ENCODE measurements at regions of chr20 and their contacts with region 1.

Region 1: GRCh38 chr20:43666376-43667328 is at the start of gene MYBL2:
- DNase-seq: peak; percentile 86
- ATAC-seq: peak; percentile 95
- H3K4me3 Mint-ChIP-seq: peak within 1 kb of the TSS; percentile 83
- H3K27ac Mint-ChIP-seq: peak within 1 kb of the TSS; percentile 58
- H3K4me1 Mint-ChIP-seq: peaks cover 2% of the 10 kb centered on the region
- H3K27me3 Mint-ChIP-seq: peaks cover 11% of the 10 kb centered on the region
- total RNA-seq, gene MYBL2: 99.8 to 113 TPM

Region 2: GRCh38 chr20:41702647-41703046 is 1964.0 kb before region 1 on chr20:
- CTCF ChIA-PET with region 1: no interaction called
- POLR2A ChIA-PET with region 1: no interaction called
- intact Hi-C with region 1: no loop called
- DNase-seq: no peak
- ATAC-seq: no peak
- H3K4me3 Mint-ChIP-seq: no peak overlapping the region
- H3K27ac Mint-ChIP-seq: no peak overlapping the region
- H3K4me1 Mint-ChIP-seq: peaks cover 3% of the 10 kb centered on the region
- H3K27me3 Mint-ChIP-seq: peaks cover 3% of the 10 kb centered on the region

Region 3: DNA sequence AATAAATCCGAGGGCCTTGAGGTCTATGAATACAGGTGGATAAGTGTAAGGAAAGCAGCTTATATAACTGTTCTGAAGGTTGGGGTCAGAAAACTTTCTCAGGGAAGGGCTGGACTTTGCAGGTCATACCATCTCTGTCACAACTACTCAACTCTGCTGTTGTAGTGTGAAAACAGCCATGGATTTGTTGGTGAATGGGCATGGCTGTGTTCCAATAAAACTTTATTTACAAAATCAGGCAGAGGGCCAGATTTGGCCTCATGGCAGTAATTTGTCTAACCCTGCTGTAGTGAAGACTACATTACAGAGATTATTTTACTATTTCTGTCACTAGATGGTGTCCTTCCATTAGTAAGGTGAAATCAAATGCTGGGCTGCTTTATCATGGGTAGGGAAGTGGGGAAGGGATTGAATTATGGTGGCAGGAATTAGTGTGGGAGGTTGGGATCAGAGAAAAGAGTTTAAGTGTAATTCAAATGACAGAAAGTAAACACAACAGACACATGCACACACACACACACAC is 1638.8 kb before region 1 on chr20:
- CTCF ChIA-PET with region 1: no interaction called
- POLR2A ChIA-PET with region 1: no interaction called
- intact Hi-C with region 1: no loop called
- DNase-seq: no peak
- ATAC-seq: no peak
- H3K4me3 Mint-ChIP-seq: no peak overlapping the region
- H3K27ac Mint-ChIP-seq: no peak overlapping the region
- H3K4me1 Mint-ChIP-seq: no peaks in the 10 kb centered on the region
- H3K27me3 Mint-ChIP-seq: peaks cover 4% of the 10 kb centered on the region

Region 4: DNA sequence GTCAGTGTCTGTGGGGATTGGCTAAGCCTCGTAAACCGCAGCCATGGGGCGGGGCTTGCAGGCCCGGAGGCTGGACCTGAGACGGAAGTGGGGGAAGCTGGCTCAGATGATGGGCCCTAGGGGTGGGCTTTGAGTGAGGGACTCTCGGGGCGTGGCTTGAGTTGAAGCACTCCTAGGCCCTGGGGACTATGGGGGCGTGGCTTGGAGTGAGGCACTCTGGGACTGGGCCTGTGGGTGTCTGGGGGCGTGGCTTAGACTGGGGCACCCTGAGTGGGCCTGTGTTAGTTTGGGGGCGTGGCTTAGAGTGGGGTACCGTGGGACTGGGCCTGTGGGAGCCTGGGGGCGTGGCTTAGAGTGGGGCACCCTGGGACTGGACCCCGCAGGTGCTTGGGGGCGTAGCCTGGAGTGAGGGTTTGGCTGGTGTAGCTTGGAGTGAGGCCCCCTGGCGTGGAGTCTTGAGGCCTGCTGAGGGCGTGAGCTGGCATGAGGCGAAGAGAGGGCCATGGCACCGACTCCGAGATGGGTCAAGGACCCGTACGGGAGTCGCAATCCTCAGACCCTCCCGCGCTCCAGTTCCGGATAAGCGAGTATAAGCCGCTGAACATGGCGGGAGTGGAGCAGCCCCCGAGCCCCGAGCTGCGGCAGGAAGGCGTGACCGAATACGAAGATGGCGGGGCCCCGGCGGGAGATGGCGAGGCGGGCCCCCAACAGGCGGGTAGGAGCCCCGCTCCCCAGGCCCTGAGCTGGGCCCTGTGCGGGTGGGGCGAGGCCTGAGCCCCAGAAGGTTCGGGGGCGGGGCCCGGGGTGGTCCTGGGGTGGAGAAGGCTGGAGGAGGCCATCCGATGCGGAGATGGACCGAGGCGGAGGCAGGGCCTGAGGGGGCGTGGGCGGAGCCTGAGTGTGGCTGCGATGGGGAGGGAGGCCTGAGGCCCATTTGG is 152.3 kb before region 1 on chr20:
- CTCF ChIA-PET with region 1: interaction called, 3 read pairs
- POLR2A ChIA-PET with region 1: no interaction called
- intact Hi-C with region 1: loop called in 1 of 2 experiments (anchors 1 kb)
- DNase-seq: peak; percentile 96
- ATAC-seq: peak; percentile 93
- H3K4me3 Mint-ChIP-seq: peak overlapping the region; percentile 90
- H3K27ac Mint-ChIP-seq: peak overlapping the region; percentile 86
- H3K4me1 Mint-ChIP-seq: peaks cover 7% of the 10 kb centered on the region
- H3K27me3 Mint-ChIP-seq: peaks cover 3% of the 10 kb centered on the region

Measured in activated CD4-positive, alpha-beta T cell treated with anti-CD3 and anti-CD28 coated beads for 36 hours (primary cell).